Motor neuron (in vitro differentiated cells): ENCODE measurements at regions of chr15 and their contacts with region 1.

Region 1: DNA sequence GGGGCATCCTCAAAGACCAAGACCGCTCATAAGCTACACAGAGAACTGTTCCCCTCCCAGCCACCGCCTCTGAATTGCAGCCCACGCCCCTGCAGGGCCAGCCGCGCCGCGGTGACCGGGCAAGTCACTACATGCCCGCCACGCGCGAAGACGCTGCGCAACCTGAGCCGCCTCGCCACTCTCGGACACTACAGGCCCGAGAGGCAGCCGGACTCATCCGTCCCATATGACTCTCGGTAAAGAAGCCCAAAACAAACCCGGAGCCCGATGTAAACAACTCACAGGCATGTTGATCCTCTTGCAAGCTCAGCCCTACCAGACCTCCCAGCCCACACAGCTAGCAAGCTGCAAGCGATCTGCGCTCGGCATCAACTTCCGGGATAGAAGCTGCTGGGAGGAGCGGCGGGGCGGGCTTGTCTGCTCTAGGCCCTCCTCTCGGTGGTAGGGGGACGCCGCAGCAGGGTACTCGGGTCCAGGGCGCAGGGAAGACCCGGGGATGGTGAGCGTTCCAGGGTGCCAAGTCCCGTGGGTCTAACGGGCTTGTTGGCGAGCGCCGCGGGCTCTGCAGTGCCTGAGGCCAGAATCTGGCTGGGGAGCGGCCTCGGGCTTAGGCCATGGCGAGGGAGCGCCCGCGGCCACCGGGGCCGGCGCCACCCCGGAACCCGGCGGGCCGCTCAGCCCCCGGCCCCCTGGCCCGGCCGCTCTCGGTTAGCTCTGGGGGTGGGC is at the start of gene RPS27L:
- ATAC-seq: peak; percentile 80 to 97 (median 94)
- H3K4me3 ChIP-seq: peak within 1 kb of the TSS; percentile 65 to 92 (median 72)
- H3K27ac ChIP-seq: peak within 1 kb of the TSS; percentile 81 to 96
- H3K4me1 ChIP-seq: peaks cover 7 to 9% of the 10 kb centered on the region in 2 donors
- total RNA-seq, gene RPS27L: 90.6 to 660 (median 259) TPM

Region 2: GRCh38 chr15:62972814-62973213 is 184.5 kb before region 1 on chr15:
- in situ Hi-C with region 1: no loop called
- ATAC-seq: no peak
- H3K4me3 ChIP-seq: no peak overlapping the region
- H3K27ac ChIP-seq: no peak overlapping the region
- H3K4me1 ChIP-seq: peaks cover 10 to 21% of the 10 kb centered on the region in 2 donors

Region 3: GRCh38 chr15:63256433-63257274 is 99.4 kb after region 1 on chr15:
- in situ Hi-C with region 1: loop called in 1 of 9 experiments (anchors 25 kb)
- ATAC-seq: peak; percentile 81 to 97 (median 93)
- H3K4me3 ChIP-seq: no peak overlapping the region
- H3K27ac ChIP-seq: peak overlapping the region; percentile 49 to 64
- H3K4me1 ChIP-seq: peaks cover 16 to 25% of the 10 kb centered on the region in 2 donors

Region 4: DNA sequence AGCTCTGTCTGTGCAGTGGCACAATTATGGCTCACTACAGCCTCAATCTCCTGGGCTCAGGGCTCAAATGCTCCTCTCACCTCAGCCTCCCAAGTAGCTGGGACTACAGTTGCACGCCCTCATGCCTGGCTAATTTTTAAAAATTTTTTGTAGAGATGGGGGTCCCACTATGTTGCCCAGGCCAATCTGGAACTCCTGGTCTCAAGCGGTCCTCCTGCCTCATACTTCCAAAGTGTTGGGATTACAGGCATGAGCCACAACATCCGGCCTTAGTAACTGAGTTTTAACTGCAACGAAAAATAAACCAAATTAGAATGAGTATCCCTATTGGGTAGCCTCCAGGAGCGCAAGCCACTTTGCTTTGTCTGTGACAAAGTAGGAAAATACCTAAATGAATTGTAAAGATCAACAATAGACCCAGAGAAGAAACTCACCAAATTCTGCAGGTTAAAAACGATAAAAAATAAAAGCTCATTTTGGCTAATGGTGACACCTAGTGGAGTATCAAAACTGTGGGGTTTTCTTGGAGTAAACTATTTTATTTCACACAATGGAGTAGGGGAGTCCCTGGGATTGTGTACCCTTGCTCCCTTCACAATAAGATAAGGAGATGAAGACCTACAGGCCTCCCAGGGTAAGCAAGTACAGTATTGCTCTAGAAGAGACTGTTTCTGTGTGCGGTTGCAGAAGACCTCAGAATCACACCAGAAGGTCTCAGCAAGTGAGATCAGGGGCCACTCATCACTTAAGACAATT is 245.4 kb after region 1 on chr15:
- in situ Hi-C with region 1: loop called in 1 of 9 experiments (anchors 25 kb)
- ATAC-seq: peak in 4 of 8 experiments; percentile 36 to 64 (median 45)
- H3K4me3 ChIP-seq: no peak overlapping the region
- H3K27ac ChIP-seq: no peak overlapping the region
- H3K4me1 ChIP-seq: no peaks in the 10 kb centered on the region